ENCODE measurements at regions of chr3 and their contacts with region 1.

Region 1: DNA sequence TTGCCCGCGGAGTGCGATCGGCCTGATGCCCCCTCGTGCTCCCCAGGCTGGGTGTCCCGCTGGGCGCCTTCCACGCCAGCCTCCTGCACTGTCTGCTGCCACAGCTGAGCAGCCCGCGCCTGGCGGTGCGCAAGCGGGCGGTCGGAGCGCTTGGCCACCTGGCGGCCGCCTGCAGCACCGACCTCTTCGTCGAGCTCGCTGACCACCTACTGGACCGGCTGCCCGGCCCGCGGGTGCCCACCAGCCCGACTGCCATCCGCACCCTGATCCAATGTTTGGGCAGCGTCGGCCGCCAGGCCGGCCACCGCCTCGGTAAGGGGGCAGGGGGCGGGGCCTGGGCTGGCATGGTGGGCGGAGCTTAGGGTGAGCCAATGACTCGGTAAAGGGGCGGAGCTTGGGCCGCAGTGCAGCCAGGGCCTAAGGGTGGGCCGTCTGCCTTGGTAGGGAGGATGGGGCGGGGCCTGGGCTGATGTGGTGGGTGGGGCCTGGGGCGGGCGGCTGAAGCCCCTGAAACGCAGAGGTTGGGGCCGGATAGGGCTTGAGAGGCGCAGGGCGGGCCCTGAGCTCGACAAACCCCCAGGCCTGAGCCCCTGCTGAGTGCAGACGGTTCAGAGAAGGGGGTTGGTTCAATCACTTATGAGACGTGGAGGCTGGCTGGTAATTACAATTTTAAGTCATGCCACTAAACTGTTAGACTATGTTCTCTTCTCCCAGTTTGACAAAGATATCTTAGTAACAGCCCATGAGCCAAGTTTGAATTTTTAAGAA is 13.7 kb downstream of the CAND2 start:
- DNase-seq: peak; percentile 90
- H3K4me3 Mint-ChIP-seq: peak overlapping the region; percentile 32
- H3K27ac Mint-ChIP-seq: no peak overlapping the region
- H3K4me1 Mint-ChIP-seq: peaks cover 7% of the 10 kb centered on the region
- H3K27me3 Mint-ChIP-seq: peaks cover 4% of the 10 kb centered on the region

Region 2: GRCh38 chr3:12782172-12782815 is 27.9 kb before region 1 on chr3:
- CTCF ChIA-PET with region 1: interaction called, 29 read pairs
- POLR2A ChIA-PET with region 1: no interaction called
- DNase-seq: no peak
- H3K4me3 Mint-ChIP-seq: no peak overlapping the region
- H3K27ac Mint-ChIP-seq: no peak overlapping the region
- H3K4me1 Mint-ChIP-seq: no peaks in the 10 kb centered on the region
- H3K27me3 Mint-ChIP-seq: peaks cover 32% of the 10 kb centered on the region

Region 3: GRCh38 chr3:12796171-12797123 is 13.8 kb before region 1 on chr3 and contains the start of gene CAND2:
- CTCF ChIA-PET with region 1: interaction called, 18 read pairs
- POLR2A ChIA-PET with region 1: interaction called, 6 read pairs
- DNase-seq: no peak
- H3K4me3 Mint-ChIP-seq: no peak within 1 kb of the TSS
- H3K27ac Mint-ChIP-seq: no peak within 1 kb of the TSS
- H3K4me1 Mint-ChIP-seq: peaks cover 3% of the 10 kb centered on the region
- H3K27me3 Mint-ChIP-seq: peaks cover 22% of the 10 kb centered on the region
- total RNA-seq, gene CAND2: 0.15 TPM in 1 of 2 experiments, not detected in the other

Region 4: DNA sequence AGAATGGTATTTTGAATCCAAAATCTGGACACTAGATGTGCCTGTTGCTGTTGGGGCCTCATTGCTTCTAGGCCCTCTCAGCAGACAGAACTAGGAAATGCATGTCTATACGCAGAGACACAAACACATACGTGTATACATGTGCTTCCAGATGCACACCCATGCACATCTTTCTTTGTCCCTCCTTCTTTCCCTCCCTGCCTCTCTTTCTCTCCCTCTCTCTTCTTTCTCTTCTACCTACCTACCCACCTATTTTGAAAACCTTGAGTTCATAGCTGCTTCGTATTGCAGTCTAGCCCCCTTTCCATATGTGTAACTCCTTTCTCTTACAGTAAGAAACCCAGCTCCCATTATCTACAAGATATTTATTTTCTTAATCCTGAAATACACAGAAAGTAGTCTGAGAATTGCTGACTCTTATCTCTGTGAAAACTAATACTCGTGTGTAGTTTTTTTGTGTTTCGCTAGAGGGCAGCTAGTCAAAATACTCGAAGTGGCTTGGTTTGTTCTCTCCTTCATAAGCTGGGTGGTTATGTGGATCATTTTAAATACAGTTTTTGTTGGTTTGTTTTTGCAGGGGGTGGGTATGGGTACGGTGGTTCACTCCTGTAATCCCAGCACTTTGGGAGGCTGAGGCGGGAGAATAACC is 12.7 kb after region 1 on chr3:
- CTCF ChIA-PET with region 1: interaction called, 18 read pairs
- POLR2A ChIA-PET with region 1: no interaction called
- DNase-seq: no peak
- H3K4me3 Mint-ChIP-seq: no peak overlapping the region
- H3K27ac Mint-ChIP-seq: no peak overlapping the region
- H3K4me1 Mint-ChIP-seq: no peaks in the 10 kb centered on the region
- H3K27me3 Mint-ChIP-seq: no peaks in the 10 kb centered on the region

Region 5: GRCh38 chr3:12830785-12831156 is 20.6 kb after region 1 on chr3:
- CTCF ChIA-PET with region 1: interaction called, 16 read pairs
- POLR2A ChIA-PET with region 1: interaction called, 3 read pairs
- DNase-seq: no peak
- H3K4me3 Mint-ChIP-seq: no peak overlapping the region
- H3K27ac Mint-ChIP-seq: no peak overlapping the region
- H3K4me1 Mint-ChIP-seq: no peaks in the 10 kb centered on the region
- H3K27me3 Mint-ChIP-seq: no peaks in the 10 kb centered on the region

Region 6: DNA sequence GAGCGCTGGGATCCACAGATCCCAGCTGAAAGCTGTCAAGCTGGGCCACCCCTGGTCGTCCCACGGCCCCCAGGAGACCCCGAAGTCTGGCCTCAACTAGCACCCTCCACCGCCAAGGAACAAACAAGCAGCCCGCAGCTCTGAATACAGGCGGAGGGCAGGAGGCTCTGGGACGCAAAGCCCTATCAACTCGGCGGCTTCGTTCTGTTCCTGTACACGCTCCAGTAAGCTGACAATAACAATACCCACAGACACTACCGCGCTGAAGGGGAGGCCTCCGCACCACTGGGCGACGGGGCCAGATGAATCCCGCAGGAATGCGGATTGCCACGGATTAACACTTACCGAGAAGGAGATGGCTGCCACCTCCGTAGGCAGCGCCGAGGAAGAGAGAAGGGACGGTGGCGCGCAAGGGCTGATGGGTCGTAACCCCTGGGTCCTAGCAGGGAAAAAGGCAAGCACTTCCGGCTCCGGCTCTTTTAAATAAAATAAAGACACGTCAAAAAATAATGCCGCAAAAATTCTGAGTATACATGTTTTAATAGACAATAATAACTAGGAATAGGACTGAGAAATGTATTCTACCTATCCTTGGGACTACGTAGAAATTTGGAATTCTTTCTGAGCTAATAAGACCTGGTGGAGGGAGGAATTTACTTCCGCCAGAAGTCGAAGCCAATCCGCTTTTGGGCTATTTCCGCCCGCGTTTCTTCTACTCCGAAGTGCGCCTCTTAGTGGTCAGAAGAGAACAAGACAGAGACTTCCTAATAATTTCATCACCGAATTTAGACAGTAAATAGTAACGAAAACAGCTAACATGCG is 31.2 kb after region 1 on chr3 and contains the start of gene RPL32:
- CTCF ChIA-PET with region 1: interaction called, 23 read pairs
- POLR2A ChIA-PET with region 1: interaction called, 12 read pairs
- DNase-seq: peak; percentile 86
- H3K4me3 Mint-ChIP-seq: peak within 1 kb of the TSS; percentile 97
- H3K27ac Mint-ChIP-seq: peak within 1 kb of the TSS; percentile 96
- H3K4me1 Mint-ChIP-seq: peaks cover 46% of the 10 kb centered on the region
- H3K27me3 Mint-ChIP-seq: peaks cover 2% of the 10 kb centered on the region
- total RNA-seq, gene RPL32: 1,634 to 1,730 TPM

Region 7: GRCh38 chr3:12853191-12853741 is 43.1 kb after region 1 on chr3:
- CTCF ChIA-PET with region 1: no interaction called
- POLR2A ChIA-PET with region 1: no interaction called
- DNase-seq: no peak
- H3K4me3 Mint-ChIP-seq: no peak overlapping the region
- H3K27ac Mint-ChIP-seq: no peak overlapping the region
- H3K4me1 Mint-ChIP-seq: no peaks in the 10 kb centered on the region
- H3K27me3 Mint-ChIP-seq: peaks cover 14% of the 10 kb centered on the region

Measured in activated CD4-positive, alpha-beta memory T cell treated with anti-CD3 and anti-CD28 coated beads, Interleukin-2, amount 10 ng/mL, durations not matched to agents 7 days and 5 days (primary cell).